IMR-90 (cell line): ENCODE measurements at regions of chr16 and their contacts with region 1.

Region 1: GRCh38 chr16:22001591-22001990 is 675 bp upstream of the PDZD9 start:
- DNase-seq: peak; percentile 71
- ATAC-seq: peak; percentile 64
- H3K4me3 ChIP-seq: no peak overlapping the region
- H3K27ac ChIP-seq: no peak overlapping the region
- H3K4me1 ChIP-seq: peaks cover 3% of the 10 kb centered on the region
- H3K27me3 ChIP-seq: no peaks in the 10 kb centered on the region
- CTCF ChIP-seq: no peak
- POLR2A ChIP-seq: no peak
- RAD21 ChIP-seq: no peak

Region 2: GRCh38 chr16:22070361-22071330 is 69.1 kb after region 1 on chr16:
- CTCF ChIA-PET with region 1: interaction called, 3 read pairs
- POLR2A ChIA-PET with region 1: no interaction called
- dilution Hi-C with region 1: no loop called
- in situ Hi-C with region 1: loop called (anchors 5 kb)
- intact Hi-C with region 1: no loop called
- DNase-seq: peak; percentile 51
- ATAC-seq: no peak
- H3K4me3 ChIP-seq: no peak overlapping the region
- H3K27ac ChIP-seq: no peak overlapping the region
- H3K4me1 ChIP-seq: peaks cover 15% of the 10 kb centered on the region
- H3K27me3 ChIP-seq: no peaks in the 10 kb centered on the region
- CTCF ChIP-seq: no peak
- POLR2A ChIP-seq: no peak
- RAD21 ChIP-seq: no peak

Region 3: GRCh38 chr16:22098405-22099255 is 97.0 kb after region 1 on chr16:
- CTCF ChIA-PET with region 1: interaction called, 16 read pairs
- POLR2A ChIA-PET with region 1: no interaction called
- dilution Hi-C with region 1: no loop called
- in situ Hi-C with region 1: loop called (anchors 5 kb)
- intact Hi-C with region 1: loop called (anchors 1 kb)
- DNase-seq: peak; percentile 44
- ATAC-seq: peak; percentile 95
- H3K4me3 ChIP-seq: no peak overlapping the region
- H3K27ac ChIP-seq: no peak overlapping the region
- H3K4me1 ChIP-seq: no peaks in the 10 kb centered on the region
- H3K27me3 ChIP-seq: peaks cover 3% of the 10 kb centered on the region
- CTCF ChIP-seq: peak; percentile 65
- POLR2A ChIP-seq: no peak
- RAD21 ChIP-seq: peak; percentile 67

Region 4: DNA sequence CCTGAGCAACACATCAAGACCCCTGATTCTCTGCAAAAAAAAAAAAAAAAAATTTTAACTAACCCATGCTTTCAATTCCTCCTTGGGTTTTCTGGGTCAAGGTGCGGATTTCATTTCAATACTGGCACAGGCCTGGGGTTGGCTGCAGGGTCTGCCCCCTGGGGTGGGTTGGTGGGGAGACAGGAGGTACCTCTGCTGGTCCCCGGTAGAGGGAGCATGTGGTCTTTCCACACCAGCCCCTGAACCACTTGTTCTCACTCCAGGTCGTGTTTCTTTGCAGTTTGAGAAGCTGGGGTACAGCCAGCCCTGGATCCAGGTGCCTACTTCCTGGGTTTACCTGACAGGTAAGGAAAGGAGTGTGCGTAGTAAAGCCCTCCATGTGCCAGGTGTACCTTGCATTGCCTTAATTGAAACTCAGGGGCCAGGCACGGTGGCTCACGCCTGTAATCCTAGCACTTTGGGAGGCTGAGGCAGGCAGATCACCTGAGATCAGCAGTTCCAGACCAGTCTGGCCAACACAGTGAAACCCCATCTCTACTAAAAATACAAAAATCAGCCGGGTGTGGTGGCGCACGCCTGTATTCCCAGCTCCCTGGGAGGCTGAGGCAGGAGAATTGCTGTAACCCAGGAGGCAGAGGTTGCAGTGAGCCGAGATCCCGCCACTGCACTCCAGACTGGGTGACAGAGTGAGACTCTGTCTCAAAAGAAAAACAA is 182.5 kb after region 1 on chr16:
- CTCF ChIA-PET with region 1: interaction called, 12 read pairs
- POLR2A ChIA-PET with region 1: no interaction called
- dilution Hi-C with region 1: no loop called
- in situ Hi-C with region 1: loop called (anchors 5 kb)
- intact Hi-C with region 1: loop called (anchors 1 kb)
- DNase-seq: no peak
- ATAC-seq: no peak
- H3K4me3 ChIP-seq: no peak overlapping the region
- H3K27ac ChIP-seq: no peak overlapping the region
- H3K4me1 ChIP-seq: no peaks in the 10 kb centered on the region
- H3K27me3 ChIP-seq: peaks cover 19% of the 10 kb centered on the region
- CTCF ChIP-seq: no peak; the same call in 1 of the 2 replicates
- POLR2A ChIP-seq: no peak
- RAD21 ChIP-seq: no peak

Region 5: DNA sequence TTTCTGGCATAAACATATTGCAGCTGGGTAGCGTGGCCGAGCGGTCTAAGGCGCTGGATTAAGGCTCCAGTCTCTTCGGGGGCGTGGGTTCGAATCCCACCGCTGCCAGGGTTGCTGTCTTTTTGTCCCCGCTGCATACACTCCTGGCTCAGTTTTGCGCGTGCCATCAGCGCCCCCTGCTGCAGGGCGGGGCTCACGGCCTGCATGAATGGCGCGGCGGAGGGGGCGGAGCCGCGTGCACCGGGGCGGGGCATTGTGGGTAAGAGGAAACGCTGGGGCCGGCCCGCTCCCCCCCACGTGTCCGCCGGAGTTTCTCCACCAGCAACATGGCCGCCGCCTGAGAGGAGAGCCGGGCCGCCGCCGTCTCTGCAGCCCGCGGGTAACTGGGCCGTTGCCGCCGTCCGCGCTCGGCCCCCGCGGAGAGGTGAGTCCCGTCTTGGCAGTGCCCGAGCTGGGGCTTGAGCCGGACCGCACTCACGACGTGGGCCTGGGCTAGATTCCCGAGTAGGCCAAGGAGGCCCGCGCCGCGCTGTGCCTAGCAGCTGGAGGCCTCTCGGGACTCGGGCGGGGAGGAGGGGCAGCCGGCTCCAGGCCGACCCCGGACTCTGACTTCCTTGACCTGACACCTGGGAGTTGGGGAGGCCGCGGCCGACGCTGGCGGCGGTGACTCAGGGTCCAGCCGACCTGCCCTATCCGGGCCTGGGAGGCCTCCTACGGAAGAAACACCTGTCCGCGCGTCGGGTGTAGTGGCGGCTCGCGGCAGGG is 295.7 kb after region 1 on chr16 and contains the start of gene POLR3E:
- CTCF ChIA-PET with region 1: interaction called, 3 read pairs
- POLR2A ChIA-PET with region 1: no interaction called
- dilution Hi-C with region 1: no loop called
- in situ Hi-C with region 1: loop called (anchors 10 kb)
- intact Hi-C with region 1: loop called (anchors 5 kb)
- DNase-seq: peak; percentile 95
- ATAC-seq: peak; percentile 93
- H3K4me3 ChIP-seq: peak within 1 kb of the TSS; percentile 75
- H3K27ac ChIP-seq: peak within 1 kb of the TSS; percentile 80
- H3K4me1 ChIP-seq: peaks cover 2% of the 10 kb centered on the region; the same call in 1 of the 2 replicates
- H3K27me3 ChIP-seq: no peaks in the 10 kb centered on the region
- CTCF ChIP-seq: peak; percentile 94
- POLR2A ChIP-seq: peak; percentile 64; the same call in 1 of the 2 replicates
- RAD21 ChIP-seq: peak; percentile 84
- total RNA-seq, gene POLR3E: 19.9 and 71.1 TPM in 2 replicates